Left colon (tissue), 2 donors: ENCODE measurements at regions of chr12 and their contacts with region 1.

Region 1: DNA sequence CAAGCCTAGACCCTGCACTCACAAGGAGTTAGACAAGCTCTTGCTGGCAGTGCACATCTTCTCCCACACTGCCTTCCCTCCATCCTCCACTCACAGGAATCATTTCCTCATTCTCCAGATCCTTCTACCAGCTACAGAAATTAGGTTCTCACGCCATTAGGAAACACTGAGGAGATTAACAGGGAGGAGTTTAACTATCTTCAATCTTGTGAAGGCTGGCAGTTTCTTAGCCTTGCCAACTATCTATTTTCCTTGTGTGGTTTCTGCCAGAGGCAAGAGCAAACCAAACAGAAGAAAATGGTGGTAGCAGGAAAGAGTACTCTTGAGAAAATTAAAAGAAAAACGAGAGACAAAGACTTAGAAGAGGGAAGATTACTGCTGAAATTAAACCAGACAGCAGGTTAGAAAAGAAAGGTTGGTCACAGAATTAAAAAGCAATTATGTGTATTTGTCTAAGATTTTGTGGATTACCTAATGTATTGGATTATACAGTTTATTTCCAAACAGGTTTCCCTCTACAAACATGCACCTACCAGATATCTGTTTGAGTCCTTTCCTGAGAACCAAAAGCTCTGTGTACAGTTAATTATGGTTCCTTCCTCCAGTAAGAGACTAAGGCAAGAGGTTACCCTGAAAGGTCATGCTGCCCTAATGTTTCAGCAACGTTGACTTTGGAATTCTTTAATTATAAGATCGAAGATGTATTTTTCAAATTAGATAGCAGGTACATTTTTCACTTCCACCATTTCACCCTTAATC is 5.0 kb downstream of the RERG start:
- DNase-seq: no peak
- ATAC-seq: no peak

Region 2: GRCh38 chr12:15001733-15002382 is 214.4 kb before region 1 on chr12:
- intact Hi-C with region 1: loop called in 1 of 2 experiments (anchors 5 kb)
- DNase-seq: peak in 1 of 2 donors; percentile 64
- ATAC-seq: no peak

Region 3: DNA sequence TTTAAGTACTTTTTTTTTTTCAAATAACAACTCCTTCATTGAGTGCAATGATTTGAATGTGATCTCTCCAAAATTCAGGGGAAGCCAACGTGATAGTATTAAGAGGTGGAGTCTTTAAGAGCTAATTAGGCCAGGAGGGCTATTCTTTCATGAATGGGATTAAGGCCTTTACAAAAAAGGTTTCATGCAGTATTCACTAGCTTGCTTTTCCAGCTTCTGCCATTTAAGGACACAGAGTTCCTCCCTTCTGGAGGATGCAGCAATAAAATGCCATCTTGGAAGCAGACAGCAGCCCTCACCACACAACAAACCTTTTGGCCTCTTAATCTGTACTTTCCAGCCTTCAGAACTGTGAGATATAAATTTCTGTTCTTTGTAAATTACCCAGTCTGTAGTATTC is 1976.5 kb after region 1 on chr12:
- intact Hi-C with region 1: no loop called
- DNase-seq: no peak
- ATAC-seq: no peak